ENCODE measurements at regions of chr1 and their contacts with region 1.

Region 1: DNA sequence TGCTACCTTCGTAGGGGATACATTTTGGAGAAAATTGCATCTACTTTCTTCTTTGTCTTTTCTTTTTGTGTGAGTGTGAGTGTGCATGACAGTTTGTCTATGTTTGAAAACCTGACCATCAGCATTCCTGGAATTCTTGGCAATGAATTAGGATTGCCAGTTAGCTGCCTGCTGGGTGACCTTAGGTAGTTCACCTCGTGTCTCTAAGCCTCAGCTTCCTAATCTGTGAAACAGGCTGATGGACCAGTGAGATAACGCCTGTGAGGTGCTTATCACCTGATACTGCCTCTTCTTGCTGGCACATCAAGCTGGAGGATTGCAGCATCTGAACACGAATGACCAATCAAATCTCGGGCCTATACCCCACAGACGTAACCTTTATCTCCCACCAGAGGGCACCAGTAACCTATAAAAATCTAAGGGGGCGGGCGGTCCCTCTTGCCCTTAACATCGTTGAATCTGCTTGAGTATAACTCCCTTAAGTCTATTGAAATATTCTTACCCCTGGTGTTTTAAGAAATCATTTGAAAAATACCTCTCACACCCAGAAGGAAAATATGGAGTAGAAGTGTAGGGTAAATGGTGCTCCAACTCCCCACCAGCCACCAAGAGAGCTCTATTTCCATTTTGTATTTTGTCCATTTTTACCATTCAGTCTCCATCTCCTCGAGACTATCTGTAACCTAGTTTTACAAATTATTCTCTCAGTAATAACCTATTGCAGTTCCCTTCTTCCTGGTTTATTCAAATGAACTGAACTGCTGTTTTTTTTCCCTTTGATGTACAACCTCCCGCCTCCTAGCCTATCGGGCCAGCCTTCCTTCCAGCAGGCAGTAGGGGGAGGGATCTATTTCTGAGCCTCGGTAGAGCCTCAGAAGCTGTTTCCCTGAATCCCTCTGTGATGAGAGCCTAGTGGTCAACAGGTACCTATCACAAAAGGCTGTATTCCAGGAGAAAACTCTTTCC is 49.7 kb downstream of the MDM4 start:
- DNase-seq: peak; percentile 90
- H3K4me3 ChIP-seq: peak overlapping the region; percentile 10
- H3K27ac ChIP-seq: peak overlapping the region; percentile 77
- H3K4me1 ChIP-seq: peaks cover 40% of the 10 kb centered on the region
- CTCF ChIP-seq: peak; percentile 90

Region 2: DNA sequence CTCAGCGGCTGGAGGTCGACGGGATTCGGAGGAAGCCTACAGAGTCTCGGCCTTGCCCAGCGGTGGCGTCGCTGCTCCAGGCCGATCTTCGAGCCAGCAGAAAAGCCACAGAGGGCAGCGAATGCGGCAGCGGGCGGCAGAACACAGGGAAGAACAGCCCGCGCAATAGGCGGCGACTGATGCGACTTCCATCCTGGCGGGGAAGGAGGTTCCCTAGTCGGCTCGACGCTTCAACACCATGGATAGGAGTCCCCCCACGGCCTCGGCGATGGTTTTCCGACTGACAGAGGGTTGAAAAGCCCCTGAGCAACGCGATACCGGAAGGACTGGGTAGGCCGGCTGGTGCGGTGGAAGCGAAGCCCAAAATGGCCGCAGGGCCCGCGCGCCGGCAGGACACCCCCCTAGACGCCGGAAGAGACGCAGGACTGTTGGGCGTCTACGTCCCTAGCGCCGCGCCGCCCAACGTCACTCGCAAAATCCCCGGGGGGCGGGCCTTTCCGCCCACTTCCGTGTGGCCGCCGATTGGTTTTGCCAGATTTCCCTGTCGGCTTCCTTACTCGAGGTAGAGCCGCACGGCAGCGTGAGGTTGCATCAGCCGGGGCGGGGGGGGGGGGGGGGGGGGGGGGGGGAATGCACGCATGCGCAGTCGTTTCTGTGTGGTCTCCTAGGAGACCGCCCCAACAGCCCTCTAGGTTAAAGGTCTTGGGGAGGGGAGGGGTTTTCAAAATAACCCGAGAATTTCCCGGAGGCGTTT is 154.3 kb before region 1 on chr1 and contains the start of gene PPP1R15B:
- CTCF ChIA-PET with region 1: no interaction called
- POLR2A ChIA-PET with region 1: no interaction called
- intact Hi-C with region 1: loop called (anchors 10 kb)
- DNase-seq: peak; percentile 99
- H3K4me3 ChIP-seq: peak within 1 kb of the TSS; percentile 98
- H3K27ac ChIP-seq: peak within 1 kb of the TSS; percentile 79
- H3K4me1 ChIP-seq: peaks cover 19% of the 10 kb centered on the region
- CTCF ChIP-seq: no peak
- total RNA-seq, gene PPP1R15B: 63.5 and 72.6 TPM in 2 replicates

Region 3: GRCh38 chr1:204530932-204531331 is 35.0 kb before region 1 on chr1:
- CTCF ChIA-PET with region 1: no interaction called
- POLR2A ChIA-PET with region 1: interaction called, 4 read pairs
- intact Hi-C with region 1: loop called (anchors 2 kb)
- DNase-seq: no peak
- H3K4me3 ChIP-seq: no peak overlapping the region
- H3K27ac ChIP-seq: peak overlapping the region; percentile 71
- H3K4me1 ChIP-seq: peaks cover 55% of the 10 kb centered on the region
- CTCF ChIP-seq: no peak

Region 4: DNA sequence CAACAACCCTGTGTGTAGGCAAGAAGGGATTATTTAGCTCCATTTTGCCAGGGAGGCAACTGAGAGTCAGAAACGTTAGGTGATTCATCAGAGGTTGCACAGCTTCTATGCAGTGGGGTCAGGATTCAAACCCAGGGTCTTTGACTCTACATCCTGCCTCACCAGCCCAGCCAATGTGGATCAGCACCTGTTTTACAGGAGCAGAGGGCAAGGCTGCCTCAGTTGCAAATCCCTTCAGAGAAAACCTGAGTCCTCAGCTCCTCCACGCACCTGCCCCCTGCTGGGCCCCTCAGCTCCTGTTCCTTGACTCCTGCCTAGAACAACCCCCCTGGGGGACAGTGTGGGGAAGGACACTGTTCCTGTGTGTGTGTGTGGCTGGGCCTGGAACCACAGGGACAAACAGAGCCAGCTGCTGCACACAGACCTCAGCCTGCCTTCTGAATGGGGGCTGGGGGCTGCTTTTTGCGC is 58.0 kb after region 1 on chr1:
- CTCF ChIA-PET with region 1: no interaction called
- POLR2A ChIA-PET with region 1: no interaction called
- intact Hi-C with region 1: loop called (anchors 1 kb)
- DNase-seq: peak; percentile 57
- H3K4me3 ChIP-seq: no peak overlapping the region
- H3K27ac ChIP-seq: no peak overlapping the region
- H3K4me1 ChIP-seq: no peaks in the 10 kb centered on the region
- CTCF ChIP-seq: peak; percentile 60

Region 5: GRCh38 chr1:204763706-204764427 is 198.0 kb after region 1 on chr1:
- CTCF ChIA-PET with region 1: interaction called, 21 read pairs
- POLR2A ChIA-PET with region 1: interaction called, 6 read pairs
- intact Hi-C with region 1: loop called (anchors 1 kb)
- DNase-seq: peak; percentile 83
- H3K4me3 ChIP-seq: no peak overlapping the region
- H3K27ac ChIP-seq: no peak overlapping the region
- H3K4me1 ChIP-seq: peaks cover 5% of the 10 kb centered on the region
- CTCF ChIP-seq: peak; percentile 86